A549 (cell line): ENCODE measurements at regions of chr14 and their contacts with region 1.

Region 1: DNA sequence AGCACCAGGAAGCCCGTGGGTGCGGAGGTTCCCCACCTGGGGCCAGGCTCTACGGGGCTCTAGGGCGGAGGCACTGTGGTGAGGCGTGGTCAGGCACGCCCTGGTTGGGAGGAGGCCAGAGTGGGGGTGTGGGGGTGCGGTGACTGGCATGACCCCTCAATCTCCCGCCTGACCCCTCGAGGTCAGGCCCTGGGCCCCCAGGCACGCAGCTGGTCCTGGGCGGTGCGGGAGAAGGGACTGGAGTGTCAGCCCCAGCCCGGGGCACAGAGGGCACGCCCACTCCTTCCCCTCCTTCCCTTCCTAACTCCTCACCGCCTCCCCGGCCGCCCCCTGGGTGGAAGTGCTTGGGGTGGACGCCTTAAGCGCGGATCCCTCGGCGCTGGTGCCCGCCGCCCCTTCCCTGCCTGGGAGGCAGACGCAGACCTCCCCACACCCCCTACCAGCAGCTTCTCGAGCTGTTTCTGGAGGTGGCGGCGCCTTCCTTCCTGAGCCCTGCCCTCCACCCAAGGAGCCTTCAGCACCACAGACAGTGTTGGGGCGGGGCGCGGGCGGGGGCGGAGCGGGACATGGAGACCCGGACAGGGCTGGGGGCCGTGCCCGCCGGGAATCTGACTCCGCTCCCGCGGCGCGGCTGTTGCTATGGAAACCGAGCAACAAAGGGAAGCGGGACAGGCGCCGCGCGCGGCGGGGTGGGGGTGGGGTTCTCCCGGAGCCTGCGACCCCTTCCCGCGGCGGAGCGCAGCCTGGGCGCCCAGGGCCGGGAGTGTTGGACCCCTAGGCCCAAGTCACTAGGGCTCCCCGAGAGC is 741 bp upstream of the CRIP2 start:
- DNase-seq: peak; percentile 89 to 92
- ATAC-seq: peak; percentile 59 to 83
- H3K4me3 ChIP-seq: peak overlapping the region; percentile 82
- H3K27ac ChIP-seq: peak overlapping the region; percentile 84 to 97
- H3K4me1 ChIP-seq: peaks cover 58% of the 10 kb centered on the region
- CTCF ChIP-seq: no peak
- EP300 ChIP-seq: no peak; a peak in 1 of 5 replicates
- POLR2A ChIP-seq: no peak
- RAD21 ChIP-seq: no peak

Region 2: DNA sequence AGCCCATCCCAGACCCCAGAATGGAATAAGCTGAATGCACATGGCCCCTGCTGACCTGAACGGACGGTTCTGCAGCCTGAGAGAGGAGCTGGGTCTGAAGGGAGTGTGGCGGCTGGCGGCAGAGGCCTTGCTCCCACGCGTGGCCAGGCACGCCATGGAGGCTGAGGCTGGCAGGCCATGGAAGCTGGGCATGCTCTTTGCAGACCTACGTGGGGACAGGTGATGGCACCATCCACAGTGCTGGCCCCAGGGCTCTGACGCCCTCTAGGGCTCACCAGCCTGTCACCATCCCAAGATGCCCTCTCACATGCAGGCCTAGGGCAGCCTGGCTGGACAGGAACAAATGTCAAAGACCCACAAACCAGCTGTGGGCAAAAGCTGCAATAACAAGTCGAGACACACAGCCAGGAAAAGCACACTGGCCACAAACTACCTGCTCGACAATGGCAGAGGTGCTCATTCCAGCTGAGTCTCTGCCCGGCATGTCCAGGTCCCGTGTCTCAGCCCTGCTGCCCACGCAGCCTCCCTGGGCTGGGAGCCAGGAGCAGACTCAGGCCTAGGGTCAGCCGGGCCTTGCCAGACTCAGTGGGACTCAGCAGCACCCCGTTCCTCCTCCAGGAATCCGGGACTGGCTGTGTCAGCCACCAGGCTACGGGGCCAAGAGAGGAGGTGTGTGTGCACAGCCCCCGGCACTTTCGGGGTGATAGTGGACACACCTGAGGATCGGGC is 205.9 kb before region 1 on chr14:
- CTCF ChIA-PET with region 1: no interaction called
- POLR2A ChIA-PET with region 1: no interaction called
- DNase-seq: peak in 1 of 2 experiments; percentile 36
- ATAC-seq: peak; percentile 82 to 86
- H3K4me3 ChIP-seq: no peak overlapping the region
- H3K27ac ChIP-seq: no peak overlapping the region
- H3K4me1 ChIP-seq: no peaks in the 10 kb centered on the region
- CTCF ChIP-seq: peak; percentile 23; the same call in 2 of the 3 replicates
- EP300 ChIP-seq: no peak
- POLR2A ChIP-seq: no peak
- RAD21 ChIP-seq: peak; percentile 30 to 58; a peak in 2 of 5 replicates

Region 3: GRCh38 chr14:105421723-105422615 is 51.9 kb before region 1 on chr14:
- CTCF ChIA-PET with region 1: no interaction called
- POLR2A ChIA-PET with region 1: no interaction called
- DNase-seq: no peak
- ATAC-seq: no peak; a peak in 1 of 6 replicates
- H3K4me3 ChIP-seq: no peak overlapping the region
- H3K27ac ChIP-seq: peak overlapping the region in 1 of 2 experiments; percentile 100; a peak in 2 of 6 replicates
- H3K4me1 ChIP-seq: peaks cover 19% of the 10 kb centered on the region; the same call in 2 of the 3 replicates
- CTCF ChIP-seq: no peak
- EP300 ChIP-seq: no peak
- POLR2A ChIP-seq: no peak
- RAD21 ChIP-seq: no peak

Region 4: DNA sequence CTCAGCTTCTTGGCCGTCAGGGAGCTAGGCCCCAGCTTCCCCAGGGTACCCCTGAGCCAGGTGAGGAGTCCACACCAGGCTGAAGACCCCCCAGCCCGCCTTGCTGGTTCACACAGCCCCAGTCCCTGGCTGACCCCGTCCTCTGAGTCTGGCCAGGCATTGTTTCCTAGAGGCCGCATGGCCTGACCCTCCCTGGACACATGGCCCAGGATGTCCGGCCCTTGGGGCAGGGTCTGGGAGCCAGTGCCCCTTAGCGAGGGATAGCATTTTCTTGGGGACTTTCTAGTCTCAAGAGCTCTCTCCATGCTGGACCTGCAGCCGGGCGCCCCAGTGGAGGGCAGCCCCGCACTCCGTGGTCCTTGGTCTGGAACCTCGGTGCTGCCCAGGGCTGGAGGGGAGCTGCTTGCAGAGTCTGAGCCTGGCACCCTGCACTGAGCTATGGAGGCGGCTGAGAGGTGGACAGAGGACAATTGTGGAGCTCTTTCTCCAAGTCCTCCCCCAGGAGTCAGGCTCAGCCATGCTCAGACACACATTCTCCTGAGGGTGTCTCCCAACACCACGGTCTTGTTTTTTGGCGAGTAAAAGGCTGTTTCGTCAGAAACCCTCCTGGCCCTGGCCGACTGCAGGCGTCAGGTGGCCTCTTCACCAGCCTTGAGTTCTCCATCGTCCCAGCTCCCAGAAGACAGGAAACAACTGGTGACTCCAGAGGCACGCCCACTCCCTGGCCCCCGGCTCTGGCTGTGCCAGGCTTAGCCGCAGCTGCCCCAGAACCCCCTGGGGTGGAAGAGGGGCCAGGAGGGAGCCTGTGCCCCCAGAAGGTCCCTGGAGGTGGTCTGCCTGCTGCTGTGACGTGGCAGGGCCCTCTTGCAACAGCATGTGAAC is 16.9 kb before region 1 on chr14:
- CTCF ChIA-PET with region 1: interaction called, 34 read pairs
- POLR2A ChIA-PET with region 1: no interaction called
- DNase-seq: peak in 1 of 2 experiments; percentile 35
- ATAC-seq: peak in 1 of 2 experiments; percentile 15; a peak in 3 of 6 replicates
- H3K4me3 ChIP-seq: no peak overlapping the region
- H3K27ac ChIP-seq: no peak overlapping the region
- H3K4me1 ChIP-seq: no peaks in the 10 kb centered on the region
- CTCF ChIP-seq: no peak
- EP300 ChIP-seq: no peak
- POLR2A ChIP-seq: no peak
- RAD21 ChIP-seq: no peak

Region 5: GRCh38 chr14:105519946-105520698 is 46.2 kb after region 1 on chr14:
- CTCF ChIA-PET with region 1: no interaction called
- POLR2A ChIA-PET with region 1: no interaction called
- DNase-seq: no peak
- ATAC-seq: no peak
- H3K4me3 ChIP-seq: no peak overlapping the region
- H3K27ac ChIP-seq: no peak overlapping the region
- H3K4me1 ChIP-seq: no peaks in the 10 kb centered on the region
- CTCF ChIP-seq: no peak
- EP300 ChIP-seq: no peak
- POLR2A ChIP-seq: no peak
- RAD21 ChIP-seq: no peak